CD4-positive, alpha-beta memory T cell (primary cell): ENCODE measurements at regions of chr12 and their contacts with region 1.

Region 1: DNA sequence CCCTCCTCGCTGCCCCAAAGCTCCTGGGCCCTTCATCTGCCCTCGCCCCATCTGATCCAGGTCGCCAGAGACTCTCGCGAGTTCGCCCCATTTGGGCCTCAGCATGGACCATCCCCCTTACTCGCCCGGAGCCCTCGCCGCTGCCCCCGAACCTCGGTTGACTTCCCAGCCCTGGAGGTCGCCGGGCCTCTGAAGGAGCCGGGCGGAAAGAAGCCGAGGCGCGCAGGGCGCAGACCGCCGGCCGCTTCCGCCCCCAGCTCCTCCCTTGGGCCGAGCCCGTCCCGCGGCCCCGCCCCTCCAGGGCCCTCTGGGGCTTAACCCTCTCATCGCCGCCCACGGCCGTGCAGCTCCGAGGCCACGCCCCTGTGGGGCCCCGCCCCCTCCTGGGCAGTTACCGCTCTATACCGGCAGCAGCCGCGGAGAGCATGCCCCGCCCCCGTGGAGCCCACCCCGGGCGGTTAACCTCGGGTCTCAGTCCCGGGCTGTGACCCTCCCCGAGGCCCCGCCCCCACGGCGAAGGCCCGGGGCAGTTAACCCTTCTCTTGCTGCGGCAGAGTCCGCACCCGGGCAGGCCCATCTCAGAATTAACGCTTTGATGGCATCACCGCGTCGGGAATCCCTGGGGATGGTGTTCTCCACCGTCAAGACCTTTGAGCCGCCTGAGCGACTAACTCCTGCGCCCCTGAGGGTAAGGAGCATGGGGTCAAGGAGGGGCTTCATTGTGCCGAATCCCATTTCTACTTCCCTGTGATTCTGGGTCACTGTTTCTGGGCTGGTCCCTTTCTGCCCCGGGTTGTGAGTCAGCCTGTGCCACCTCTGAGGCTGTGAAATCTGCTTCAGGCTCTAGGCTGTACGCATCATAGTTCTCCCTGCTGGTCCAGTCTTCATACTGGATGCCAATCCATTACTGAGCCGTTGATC is at the start of gene SPSB2:
- DNase-seq: peak; percentile 97 to 98 (median 98)
- H3K4me3 ChIP-seq: peak within 1 kb of the TSS; percentile 93 to 99
- H3K4me3 Mint-ChIP-seq: peak within 1 kb of the TSS; percentile 90 to 93 (median 92)
- H3K27ac ChIP-seq: peak within 1 kb of the TSS; percentile 87
- H3K27ac Mint-ChIP-seq: peak within 1 kb of the TSS; percentile 90 to 96 (median 93)
- H3K4me1 ChIP-seq: peaks cover 45% of the 10 kb centered on the region
- H3K4me1 Mint-ChIP-seq: peaks cover 32 to 66% (median 49%) of the 10 kb centered on the region in 4 donors
- H3K27me3 ChIP-seq: no peaks in the 10 kb centered on the region
- H3K27me3 Mint-ChIP-seq: no peaks in the 10 kb centered on the region
- total RNA-seq, gene SPSB2: 19.8 to 21.9 TPM

Region 2: GRCh38 chr12:6688999-6689882 is 184.1 kb before region 1 on chr12 and contains the start of gene ZNF384:
- CTCF ChIA-PET with region 1: interaction called, 7 read pairs
- POLR2A ChIA-PET with region 1: interaction called, 28 read pairs
- intact Hi-C with region 1: no loop called
- DNase-seq: peak; percentile 93 to 98 (median 97)
- H3K4me3 ChIP-seq: peak within 1 kb of the TSS; percentile 59 to 83
- H3K4me3 Mint-ChIP-seq: peak within 1 kb of the TSS; percentile 92 to 98 (median 96)
- H3K27ac ChIP-seq: peak within 1 kb of the TSS; percentile 93
- H3K27ac Mint-ChIP-seq: peak within 1 kb of the TSS; percentile 92 to 100 (median 99)
- H3K4me1 ChIP-seq: peaks cover 58% of the 10 kb centered on the region
- H3K4me1 Mint-ChIP-seq: peaks cover 40 to 59% (median 46%) of the 10 kb centered on the region in 4 donors
- H3K27me3 ChIP-seq: no peaks in the 10 kb centered on the region
- H3K27me3 Mint-ChIP-seq: no peaks in the 10 kb centered on the region
- total RNA-seq, gene ZNF384: 88.6 to 88.7 TPM

Region 3: DNA sequence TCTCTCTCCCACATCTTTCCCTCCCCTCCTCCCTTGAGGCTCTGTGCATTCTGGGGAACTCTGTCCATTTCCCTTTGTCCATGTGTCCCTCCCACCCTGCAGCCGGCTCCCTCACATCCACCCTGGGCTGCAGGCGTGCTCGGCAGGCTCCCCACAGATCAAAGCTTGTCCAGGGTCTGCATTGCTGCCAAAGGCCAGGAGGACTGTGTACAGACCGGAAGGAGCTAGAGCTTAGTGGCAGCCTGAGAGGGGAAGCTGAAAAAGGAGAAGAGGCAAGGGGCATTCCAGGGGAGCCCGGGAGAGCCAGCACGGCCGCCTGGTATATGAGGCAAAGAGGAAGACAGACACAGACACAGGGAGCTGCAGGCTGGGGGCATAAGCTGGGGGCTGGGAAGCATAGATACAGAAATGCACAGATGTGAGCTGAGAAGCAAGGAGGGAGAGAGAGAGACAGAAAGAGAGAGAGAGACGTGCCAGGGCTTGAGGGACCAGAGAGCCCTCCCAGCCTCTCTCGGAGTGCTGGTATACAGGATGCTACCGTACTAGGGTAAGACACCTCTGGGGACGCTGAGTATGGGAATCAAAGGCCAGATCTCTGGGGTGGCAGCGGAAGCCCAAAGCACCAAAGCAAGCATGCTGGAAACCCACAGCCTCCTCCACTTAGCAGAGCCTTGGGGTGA is 80.7 kb before region 1 on chr12:
- CTCF ChIA-PET with region 1: interaction called, 10 read pairs
- POLR2A ChIA-PET with region 1: interaction called, 8 read pairs
- intact Hi-C with region 1: no loop called
- DNase-seq: peak; percentile 59 to 73 (median 66)
- H3K4me3 ChIP-seq: peak overlapping the region; percentile 79
- H3K4me3 Mint-ChIP-seq: peak overlapping the region; percentile 95 to 99 (median 98)
- H3K27ac ChIP-seq: peak overlapping the region; percentile 83
- H3K27ac Mint-ChIP-seq: peak overlapping the region; percentile 90 to 99 (median 98)
- H3K4me1 ChIP-seq: peaks cover 55% of the 10 kb centered on the region
- H3K4me1 Mint-ChIP-seq: peaks cover 50 to 92% (median 66%) of the 10 kb centered on the region in 4 donors
- H3K27me3 ChIP-seq: no peaks in the 10 kb centered on the region
- H3K27me3 Mint-ChIP-seq: no peaks in the 10 kb centered on the region

Region 4: GRCh38 chr12:6861391-6861790 is 12.0 kb before region 1 on chr12:
- CTCF ChIA-PET with region 1: interaction called, 17 read pairs
- POLR2A ChIA-PET with region 1: interaction called, 270 read pairs
- intact Hi-C with region 1: no loop called
- DNase-seq: no peak
- H3K4me3 ChIP-seq: no peak overlapping the region
- H3K4me3 Mint-ChIP-seq: no peak overlapping the region
- H3K27ac ChIP-seq: no peak overlapping the region
- H3K27ac Mint-ChIP-seq: no peak overlapping the region
- H3K4me1 ChIP-seq: peaks cover 1% of the 10 kb centered on the region
- H3K4me1 Mint-ChIP-seq: peaks cover under 1 to 6% (median under 1%) of the 10 kb centered on the region in 4 donors
- H3K27me3 ChIP-seq: no peaks in the 10 kb centered on the region
- H3K27me3 Mint-ChIP-seq: no peaks in the 10 kb centered on the region

Region 5: DNA sequence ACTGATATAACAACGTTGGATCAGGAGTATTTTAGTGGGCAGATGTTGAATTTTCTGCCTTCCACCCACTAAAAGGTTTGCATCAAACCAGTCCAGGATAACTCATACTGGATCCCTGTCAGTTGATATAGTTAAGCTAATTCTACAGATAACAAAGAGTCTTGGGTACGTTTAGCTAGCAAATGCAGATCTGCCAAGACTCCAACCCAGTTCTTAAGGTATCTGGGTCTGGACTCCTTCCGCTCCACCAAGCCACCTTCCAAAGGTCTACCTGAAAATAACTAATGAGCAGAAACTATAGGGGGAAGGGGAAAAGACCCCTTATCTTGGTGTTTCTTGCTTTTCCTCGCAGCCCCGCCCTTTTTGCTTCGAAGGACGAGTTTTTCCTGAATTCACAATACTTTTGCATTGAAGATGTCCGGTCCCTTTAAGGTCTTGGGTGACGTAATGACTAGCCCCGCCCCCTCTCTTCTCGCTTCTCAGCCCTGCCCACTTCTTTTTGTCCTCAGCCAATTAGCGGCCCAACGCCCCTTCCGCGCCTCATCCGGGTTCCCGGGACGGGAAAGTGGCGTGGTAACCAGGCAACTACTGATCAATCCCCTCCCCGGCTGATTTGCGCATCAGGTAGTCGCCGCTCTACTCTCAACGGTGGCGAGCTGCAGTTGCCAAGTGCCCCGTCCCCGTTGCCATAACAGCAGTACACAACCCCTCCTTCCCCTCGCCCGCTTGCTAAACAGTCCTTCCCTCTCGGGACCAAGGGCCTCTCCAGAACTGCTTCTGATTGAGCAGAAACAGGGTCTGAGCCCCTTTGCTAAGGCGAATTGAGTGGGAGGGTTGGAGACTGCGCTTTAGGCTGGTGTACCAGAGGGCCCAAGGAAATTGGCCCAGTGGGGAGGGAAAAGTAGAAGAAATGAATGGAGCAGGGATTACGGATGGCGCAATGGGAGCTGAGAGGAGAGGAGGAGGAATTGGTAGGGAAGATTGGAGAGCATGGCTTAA is 31.2 kb after region 1 on chr12 and contains the start of gene LRRC23:
- CTCF ChIA-PET with region 1: interaction called, 45 read pairs
- POLR2A ChIA-PET with region 1: interaction called, 33 read pairs
- intact Hi-C with region 1: loop called (anchors 1 kb)
- DNase-seq: peak; percentile 97 to 99 (median 98)
- H3K4me3 ChIP-seq: peak within 1 kb of the TSS; percentile 74 to 95
- H3K4me3 Mint-ChIP-seq: no peak within 1 kb of the TSS
- H3K27ac ChIP-seq: peak within 1 kb of the TSS; percentile 86
- H3K27ac Mint-ChIP-seq: no peak within 1 kb of the TSS
- H3K4me1 ChIP-seq: peaks cover 19% of the 10 kb centered on the region
- H3K4me1 Mint-ChIP-seq: peaks cover 0 to 8% (median 6%) of the 10 kb centered on the region in 4 donors
- H3K27me3 ChIP-seq: no peaks in the 10 kb centered on the region
- H3K27me3 Mint-ChIP-seq: no peaks in the 10 kb centered on the region
- total RNA-seq, gene LRRC23: 8.3 to 9.1 TPM

Region 6: GRCh38 chr12:6937481-6938297 is 64.3 kb after region 1 on chr12:
- CTCF ChIA-PET with region 1: interaction called, 54 read pairs
- POLR2A ChIA-PET with region 1: interaction called, 70 read pairs
- intact Hi-C with region 1: loop called (anchors 1 kb)
- DNase-seq: peak; percentile 92 to 96 (median 95)
- H3K4me3 ChIP-seq: peak overlapping the region; percentile 47 to 82
- H3K4me3 Mint-ChIP-seq: peak overlapping the region; percentile 80 to 88 (median 84)
- H3K27ac ChIP-seq: peak overlapping the region; percentile 95
- H3K27ac Mint-ChIP-seq: peak overlapping the region; percentile 93 to 99 (median 94)
- H3K4me1 ChIP-seq: peaks cover 29% of the 10 kb centered on the region
- H3K4me1 Mint-ChIP-seq: peaks cover 20 to 48% (median 35%) of the 10 kb centered on the region in 4 donors
- H3K27me3 ChIP-seq: no peaks in the 10 kb centered on the region
- H3K27me3 Mint-ChIP-seq: no peaks in the 10 kb centered on the region

Region 7: DNA sequence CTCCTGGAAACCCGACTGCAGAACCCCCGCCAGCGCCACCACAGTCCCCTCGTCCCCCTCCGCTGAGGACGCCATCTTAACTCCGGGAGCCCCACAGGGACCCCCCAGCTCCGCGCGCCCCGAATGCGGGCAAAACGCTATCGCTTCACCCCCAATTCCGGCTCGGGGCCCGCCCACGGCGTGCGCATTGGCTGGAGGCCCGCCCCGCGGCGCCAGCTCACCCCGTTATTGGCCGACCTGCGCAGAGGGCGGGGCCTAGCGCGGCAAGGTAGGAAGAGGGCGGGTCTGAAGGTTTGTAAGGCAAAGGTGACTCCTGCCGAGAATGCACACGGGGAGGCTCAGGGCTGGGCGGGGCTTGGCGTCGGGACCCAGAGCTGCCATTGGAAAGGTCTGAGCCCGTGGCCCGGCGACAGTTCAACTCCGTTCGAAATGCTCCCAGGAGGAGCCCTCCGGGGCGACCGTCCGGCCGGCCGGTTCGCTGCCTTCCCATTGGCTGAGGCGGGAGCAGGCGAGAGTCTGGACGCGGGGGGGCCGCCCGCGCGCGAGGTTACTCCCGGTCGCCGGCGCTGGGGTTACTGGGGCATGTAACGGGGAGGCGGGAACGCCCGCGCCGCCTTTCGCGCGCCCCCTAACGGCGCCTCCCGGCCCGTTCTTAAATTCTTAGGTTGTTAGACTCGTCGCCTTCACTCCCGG is 145.1 kb after region 1 on chr12 and contains the start of gene LPCAT3:
- CTCF ChIA-PET with region 1: interaction called, 7 read pairs
- POLR2A ChIA-PET with region 1: interaction called, 14 read pairs
- intact Hi-C with region 1: loop called (anchors 1 kb)
- DNase-seq: peak; percentile 98 to 99 (median 98)
- H3K4me3 ChIP-seq: peak within 1 kb of the TSS; percentile 72 to 76
- H3K4me3 Mint-ChIP-seq: peak within 1 kb of the TSS; percentile 86 to 99 (median 95)
- H3K27ac ChIP-seq: peak within 1 kb of the TSS; percentile 85
- H3K27ac Mint-ChIP-seq: peak within 1 kb of the TSS; percentile 90 to 98 (median 95)
- H3K4me1 ChIP-seq: peaks cover 23% of the 10 kb centered on the region
- H3K4me1 Mint-ChIP-seq: peaks cover 18 to 37% (median 24%) of the 10 kb centered on the region in 4 donors
- H3K27me3 ChIP-seq: no peaks in the 10 kb centered on the region
- H3K27me3 Mint-ChIP-seq: no peaks in the 10 kb centered on the region
- total RNA-seq, gene LPCAT3: 18.3 to 21.6 TPM